ENCODE measurements at regions of chr9 and their contacts with region 1.

Region 1: DNA sequence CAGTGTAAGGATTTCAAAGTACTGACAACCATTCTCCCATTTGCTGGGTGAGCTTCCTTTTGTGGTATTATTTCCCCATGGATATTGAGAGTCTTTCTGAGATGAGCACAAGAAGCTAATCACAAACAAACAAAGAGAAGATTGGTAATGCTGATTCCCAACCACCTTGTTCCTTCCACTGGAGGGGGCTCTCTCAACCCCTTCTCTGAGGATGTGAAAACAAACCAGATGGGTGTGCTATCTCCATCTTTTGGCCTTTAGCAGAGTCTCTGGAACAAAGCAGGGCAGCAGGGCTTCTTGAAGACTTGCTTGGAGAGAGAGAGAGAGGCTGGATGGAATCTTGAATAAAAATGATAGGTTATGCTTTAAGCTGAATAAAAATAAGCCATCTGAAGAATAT is 576.7 kb upstream of the ZNF462 start:
- DNase-seq: peak; percentile 36
- ATAC-seq: peak; percentile 91
- H3K4me3 Mint-ChIP-seq: no peak overlapping the region
- H3K27ac Mint-ChIP-seq: no peak overlapping the region
- H3K4me1 Mint-ChIP-seq: peaks cover 26% of the 10 kb centered on the region
- H3K27me3 Mint-ChIP-seq: no peaks in the 10 kb centered on the region
- CTCF ChIP-seq: peak; percentile 17; the same call in 1 of the 2 replicates

Region 2: GRCh38 chr9:106339882-106340281 is 53.6 kb after region 1 on chr9:
- CTCF ChIA-PET with region 1: no interaction called
- POLR2A ChIA-PET with region 1: no interaction called
- DNase-seq: no peak
- ATAC-seq: no peak
- H3K4me3 Mint-ChIP-seq: no peak overlapping the region
- H3K27ac Mint-ChIP-seq: no peak overlapping the region
- H3K4me1 Mint-ChIP-seq: no peaks in the 10 kb centered on the region
- H3K27me3 Mint-ChIP-seq: no peaks in the 10 kb centered on the region
- CTCF ChIP-seq: no peak

Region 3: GRCh38 chr9:106621313-106622163 is 335.3 kb after region 1 on chr9:
- CTCF ChIA-PET with region 1: interaction called, 10 read pairs
- POLR2A ChIA-PET with region 1: no interaction called
- DNase-seq: peak; percentile 20
- ATAC-seq: peak; percentile 83
- H3K4me3 Mint-ChIP-seq: peak overlapping the region; percentile 39
- H3K27ac Mint-ChIP-seq: peak overlapping the region; percentile 75
- H3K4me1 Mint-ChIP-seq: peaks cover 39% of the 10 kb centered on the region
- H3K27me3 Mint-ChIP-seq: peaks cover 6% of the 10 kb centered on the region
- CTCF ChIP-seq: no peak

Measured in WTC11 (cell line).